ENCODE measurements at regions of chr10 and their contacts with region 1.

Region 1: DNA sequence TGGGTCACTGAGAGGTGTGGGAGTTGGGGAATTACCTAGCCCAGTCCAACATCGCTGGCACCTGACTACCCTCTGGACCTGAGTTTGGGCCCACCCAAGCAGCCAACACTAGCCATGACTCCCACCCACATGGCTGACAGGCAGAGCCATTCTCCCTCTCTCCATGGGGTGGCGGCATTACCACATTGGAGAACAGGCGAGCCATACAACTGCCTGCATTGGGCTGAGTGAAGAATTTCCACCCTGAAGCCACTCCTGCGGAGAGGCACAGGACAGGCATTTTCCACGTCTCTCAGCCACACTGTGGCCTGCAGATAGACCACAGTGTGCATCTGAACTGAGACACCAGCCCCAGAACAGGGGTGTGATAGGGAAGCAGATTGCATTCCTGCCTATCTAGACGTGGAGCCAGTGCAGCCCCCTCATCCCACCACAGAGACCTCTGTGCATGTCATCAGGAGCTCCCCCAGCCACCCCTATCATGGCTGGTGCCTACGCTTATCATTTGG is 58.2 kb upstream of the ANTXRL start:
- DNase-seq: peak; percentile 60 to 87
- H3K4me3 ChIP-seq: no peak overlapping the region
- H3K27ac ChIP-seq: no peak overlapping the region
- H3K4me1 ChIP-seq: peaks cover 0 to 9% (median 7%) of the 10 kb centered on the region in 4 experiments; a peak in 5 of 7 replicates
- H3K27me3 ChIP-seq: no peaks in the 10 kb centered on the region
- CTCF ChIP-seq: peak; percentile 92 to 99 (median 92)
- EP300 ChIP-seq: no peak
- POLR2A ChIP-seq: no peak
- RAD21 ChIP-seq: peak; percentile 94 to 96

Region 2: GRCh38 chr10:46096909-46097575 is 131.6 kb before region 1 on chr10:
- CTCF ChIA-PET with region 1: interaction called, 15 read pairs
- POLR2A ChIA-PET with region 1: no interaction called
- DNase-seq: no peak
- H3K4me3 ChIP-seq: no peak overlapping the region
- H3K27ac ChIP-seq: no peak overlapping the region
- H3K4me1 ChIP-seq: peaks cover 0 to 8% (median 0%) of the 10 kb centered on the region in 4 experiments; a peak in 1 of 7 replicates
- H3K27me3 ChIP-seq: no peaks in the 10 kb centered on the region
- CTCF ChIP-seq: no peak
- EP300 ChIP-seq: no peak
- POLR2A ChIP-seq: no peak
- RAD21 ChIP-seq: no peak

Region 3: DNA sequence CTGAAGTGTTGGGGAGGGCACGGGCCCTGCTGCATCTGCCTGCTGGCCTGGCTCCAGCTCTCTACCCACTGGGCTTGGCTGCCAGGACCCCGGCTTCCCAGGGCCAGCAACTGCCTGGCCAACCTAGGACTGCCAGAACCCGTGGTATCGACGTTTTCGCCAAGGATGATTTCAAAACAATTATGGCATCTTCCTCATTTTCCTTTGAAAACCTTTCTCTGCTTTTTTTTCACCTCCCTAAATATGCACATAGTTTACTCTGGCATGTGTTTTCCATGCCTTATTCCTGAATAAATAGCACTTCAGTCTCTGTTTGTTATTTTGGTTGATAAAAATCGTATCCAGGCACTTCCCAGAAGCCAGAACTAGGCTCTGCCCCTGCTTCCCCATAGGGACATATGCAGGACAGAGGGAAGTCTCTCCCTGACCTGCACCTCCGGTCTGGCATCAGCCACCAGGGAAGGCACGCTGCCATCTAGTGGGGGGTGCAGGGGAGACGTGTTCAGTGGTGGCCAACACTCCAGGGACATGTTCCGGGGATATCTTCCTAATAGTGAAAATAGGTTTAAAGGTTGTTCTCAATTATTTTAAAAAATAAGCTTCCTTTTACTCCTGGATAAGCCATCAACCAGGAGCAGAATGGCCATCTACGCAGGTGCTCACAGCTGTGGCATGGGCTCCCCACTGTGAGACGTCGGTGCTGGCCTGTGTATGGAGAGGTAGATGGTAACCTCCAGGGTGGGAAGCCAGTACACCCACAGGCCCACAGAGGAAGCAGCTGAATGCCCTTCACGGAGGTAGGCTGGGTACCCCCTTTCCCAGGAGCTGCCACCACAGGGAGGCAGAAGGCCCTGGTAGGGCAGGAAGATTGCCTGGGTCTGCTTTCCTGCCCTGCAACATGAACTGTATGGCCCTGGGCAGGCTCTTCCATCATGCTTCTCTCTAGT is 27.5 kb after region 1 on chr10:
- CTCF ChIA-PET with region 1: interaction called, 99 read pairs
- POLR2A ChIA-PET with region 1: no interaction called
- DNase-seq: peak; percentile 62 to 91
- H3K4me3 ChIP-seq: no peak overlapping the region
- H3K27ac ChIP-seq: no peak overlapping the region
- H3K4me1 ChIP-seq: peaks cover 0 to 2% (median 0%) of the 10 kb centered on the region in 4 experiments; a peak in 2 of 7 replicates
- H3K27me3 ChIP-seq: peaks cover 0 to 2% (median 0%) of the 10 kb centered on the region in 4 experiments; a peak in 1 of 7 replicates
- CTCF ChIP-seq: peak; percentile 87 to 95 (median 90)
- EP300 ChIP-seq: no peak
- POLR2A ChIP-seq: no peak
- RAD21 ChIP-seq: peak; percentile 80 to 84

Region 4: DNA sequence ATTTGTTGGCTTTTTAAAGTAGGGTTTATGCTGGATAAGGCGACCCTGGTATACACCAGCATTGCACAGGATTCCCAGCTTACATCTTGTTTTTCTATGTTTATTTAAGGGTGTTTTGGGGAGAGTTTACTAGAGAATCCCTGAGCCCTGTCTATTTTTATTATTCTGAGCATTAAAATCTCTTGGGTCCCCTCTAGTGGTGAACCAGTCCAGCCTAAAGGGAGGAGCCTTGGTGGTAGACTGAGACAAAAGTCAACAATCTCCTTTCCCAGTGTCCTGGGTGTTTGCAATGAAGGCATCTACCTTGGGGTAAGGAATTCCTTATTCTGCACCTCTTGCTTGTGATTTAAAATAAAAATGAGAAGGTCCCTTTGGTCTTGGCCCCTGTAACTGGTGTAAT is 96.4 kb after region 1 on chr10:
- CTCF ChIA-PET with region 1: interaction called, 11 read pairs
- POLR2A ChIA-PET with region 1: no interaction called
- DNase-seq: no peak
- H3K4me3 ChIP-seq: no peak overlapping the region
- H3K27ac ChIP-seq: no peak overlapping the region
- H3K4me1 ChIP-seq: peaks cover 0 to 8% (median 7%) of the 10 kb centered on the region in 4 experiments; a peak in 5 of 7 replicates
- H3K27me3 ChIP-seq: no peaks in the 10 kb centered on the region
- CTCF ChIP-seq: peak in 1 of 3 experiments; percentile 37; a peak in 2 of 4 replicates
- EP300 ChIP-seq: no peak
- POLR2A ChIP-seq: no peak
- RAD21 ChIP-seq: peak; percentile 31 to 41; a peak in 3 of 4 replicates